Activated CD8-positive, alpha-beta T cell treated with anti-CD3 and anti-CD28 coated beads for 36 hours (primary cell): ENCODE measurements at regions of chr5 and their contacts with region 1.

Region 1: GRCh38 chr5:41869739-41870626 is at the start of gene OXCT1:
- DNase-seq: peak; percentile 95
- ATAC-seq: peak; percentile 93
- H3K4me3 Mint-ChIP-seq: peak within 1 kb of the TSS; percentile 87
- H3K27ac Mint-ChIP-seq: peak within 1 kb of the TSS; percentile 94
- H3K4me1 Mint-ChIP-seq: peaks cover 55% of the 10 kb centered on the region
- H3K27me3 Mint-ChIP-seq: no peaks in the 10 kb centered on the region
- CTCF ChIP-seq: no peak
- total RNA-seq, gene OXCT1: 65.0 to 70.5 TPM

Region 2: GRCh38 chr5:41903892-41904799 is 34.2 kb after region 1 on chr5 and contains the start of gene RIMOC1:
- CTCF ChIA-PET with region 1: interaction called, 6 read pairs
- POLR2A ChIA-PET with region 1: interaction called, 19 read pairs
- intact Hi-C with region 1: loop called (anchors 2 kb)
- DNase-seq: peak; percentile 97
- ATAC-seq: peak; percentile 96
- H3K4me3 Mint-ChIP-seq: peak within 1 kb of the TSS; percentile 95
- H3K27ac Mint-ChIP-seq: peak within 1 kb of the TSS; percentile 99
- H3K4me1 Mint-ChIP-seq: peaks cover 41% of the 10 kb centered on the region
- H3K27me3 Mint-ChIP-seq: peaks cover 3% of the 10 kb centered on the region
- CTCF ChIP-seq: no peak
- total RNA-seq, gene RIMOC1: 19.5 to 19.8 TPM

Region 3: GRCh38 chr5:41924872-41925554 is 55.0 kb after region 1 on chr5 and contains the start of gene FBXO4:
- CTCF ChIA-PET with region 1: interaction called, 3 read pairs
- POLR2A ChIA-PET with region 1: interaction called, 4 read pairs
- intact Hi-C with region 1: loop called (anchors 5 kb)
- DNase-seq: peak; percentile 90
- ATAC-seq: peak; percentile 98
- H3K4me3 Mint-ChIP-seq: peak within 1 kb of the TSS; percentile 72
- H3K27ac Mint-ChIP-seq: peak within 1 kb of the TSS; percentile 93
- H3K4me1 Mint-ChIP-seq: peaks cover 11% of the 10 kb centered on the region
- H3K27me3 Mint-ChIP-seq: no peaks in the 10 kb centered on the region
- CTCF ChIP-seq: peak; percentile 46
- total RNA-seq, gene FBXO4: 18.5 to 21.0 TPM